Activated B cell treated with CpG ODN at 0.5 μM for 24 hours (primary cell): ENCODE measurements at regions of chr2 and their contacts with region 1.

Region 1: GRCh38 chr2:196200557-196200956 is 29.2 kb upstream of the STK17B start:
- DNase-seq: no peak
- ATAC-seq: peak; percentile 82
- H3K4me3 Mint-ChIP-seq: peak overlapping the region; percentile 53
- H3K27ac Mint-ChIP-seq: peak overlapping the region; percentile 80
- H3K4me1 Mint-ChIP-seq: peaks cover 40% of the 10 kb centered on the region
- H3K27me3 Mint-ChIP-seq: no peaks in the 10 kb centered on the region
- CTCF ChIP-seq: no peak

Region 2: GRCh38 chr2:196177124-196177523 is 23.4 kb before region 1 on chr2:
- CTCF ChIA-PET with region 1: interaction called, 8 read pairs
- POLR2A ChIA-PET with region 1: interaction called, 45 read pairs
- intact Hi-C with region 1: loop called (anchors 1 kb)
- DNase-seq: no peak
- ATAC-seq: no peak
- H3K4me3 Mint-ChIP-seq: peak overlapping the region; percentile 74
- H3K27ac Mint-ChIP-seq: peak overlapping the region; percentile 94
- H3K4me1 Mint-ChIP-seq: peaks cover 93% of the 10 kb centered on the region
- H3K27me3 Mint-ChIP-seq: no peaks in the 10 kb centered on the region
- CTCF ChIP-seq: no peak

Region 3: DNA sequence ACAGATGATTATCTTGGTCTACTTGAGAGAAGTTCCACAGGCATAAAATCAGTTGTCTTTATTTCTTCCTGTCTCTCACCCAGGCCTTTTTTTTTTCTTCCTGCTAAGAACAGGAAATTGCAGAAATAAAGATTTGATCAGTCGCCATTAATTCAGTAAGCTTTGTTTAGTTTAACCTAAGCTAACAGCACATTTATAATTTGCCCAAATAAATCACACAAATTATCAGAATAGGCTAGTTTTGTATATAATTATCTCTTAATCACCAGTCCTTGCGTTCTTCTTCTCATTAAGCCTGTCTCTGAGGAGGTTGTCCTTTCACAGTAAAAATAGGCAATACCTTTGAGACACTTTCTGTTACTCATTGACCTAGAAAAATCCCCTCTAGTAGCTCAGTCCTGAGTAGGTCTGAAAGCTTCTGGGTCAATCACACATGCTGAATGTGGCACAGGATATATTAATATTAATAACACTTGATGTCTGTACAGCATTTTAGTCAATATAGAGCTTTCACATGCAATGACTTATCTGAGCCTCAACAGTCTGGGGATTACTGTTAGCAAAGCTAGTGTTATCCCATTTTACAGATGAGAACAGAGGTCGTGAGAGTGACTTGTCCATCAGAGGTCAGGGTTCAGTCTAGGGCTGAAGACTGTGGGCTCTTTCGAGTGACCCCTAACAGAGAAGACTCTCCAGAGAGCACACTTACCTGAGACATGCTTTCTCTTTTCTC is 18.0 kb before region 1 on chr2:
- CTCF ChIA-PET with region 1: interaction called, 8 read pairs
- POLR2A ChIA-PET with region 1: interaction called, 45 read pairs
- intact Hi-C with region 1: loop called (anchors 1 kb)
- DNase-seq: no peak
- ATAC-seq: peak; percentile 83
- H3K4me3 Mint-ChIP-seq: peak overlapping the region; percentile 67
- H3K27ac Mint-ChIP-seq: peak overlapping the region; percentile 95
- H3K4me1 Mint-ChIP-seq: peaks cover 77% of the 10 kb centered on the region
- H3K27me3 Mint-ChIP-seq: no peaks in the 10 kb centered on the region
- CTCF ChIP-seq: no peak

Region 4: DNA sequence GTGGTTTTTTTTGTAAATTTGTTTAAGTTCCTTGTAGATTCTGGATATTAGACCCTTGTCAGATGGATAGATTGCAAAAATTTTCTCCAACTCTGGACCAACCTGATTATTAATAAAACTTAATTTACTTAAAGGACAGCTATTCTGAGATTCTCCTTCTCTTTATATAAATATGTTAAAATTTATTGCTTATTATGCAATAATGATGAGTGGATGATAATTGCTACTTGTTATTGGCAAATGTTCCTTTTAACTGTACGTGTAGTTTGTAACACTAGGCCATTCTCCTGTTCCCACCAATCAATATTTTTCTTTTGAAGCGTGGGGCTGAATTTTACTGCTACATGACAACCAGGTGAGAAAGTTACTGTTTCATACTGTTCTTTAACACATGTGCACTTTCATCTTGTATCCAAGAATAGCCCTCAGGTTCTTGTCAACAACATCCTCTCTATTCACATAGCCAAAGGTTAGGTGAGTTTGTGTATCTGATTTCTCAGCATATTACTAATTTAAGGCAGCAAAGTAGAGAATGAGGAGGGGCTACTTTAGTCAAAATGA is 12.6 kb before region 1 on chr2:
- CTCF ChIA-PET with region 1: interaction called, 8 read pairs
- POLR2A ChIA-PET with region 1: interaction called, 24 read pairs
- intact Hi-C with region 1: loop called (anchors 1 kb)
- DNase-seq: no peak
- ATAC-seq: no peak
- H3K4me3 Mint-ChIP-seq: no peak overlapping the region
- H3K27ac Mint-ChIP-seq: no peak overlapping the region
- H3K4me1 Mint-ChIP-seq: peaks cover 39% of the 10 kb centered on the region
- H3K27me3 Mint-ChIP-seq: no peaks in the 10 kb centered on the region
- CTCF ChIP-seq: no peak